Activated CD4-positive, alpha-beta T cell treated with anti-CD3 and anti-CD28 coated beads, Interleukin-2, amount 10 ng/mL, durations not matched to agents 7 days and 5 days (primary cell): ENCODE measurements at regions of chr11 and their contacts with region 1.

Region 1: DNA sequence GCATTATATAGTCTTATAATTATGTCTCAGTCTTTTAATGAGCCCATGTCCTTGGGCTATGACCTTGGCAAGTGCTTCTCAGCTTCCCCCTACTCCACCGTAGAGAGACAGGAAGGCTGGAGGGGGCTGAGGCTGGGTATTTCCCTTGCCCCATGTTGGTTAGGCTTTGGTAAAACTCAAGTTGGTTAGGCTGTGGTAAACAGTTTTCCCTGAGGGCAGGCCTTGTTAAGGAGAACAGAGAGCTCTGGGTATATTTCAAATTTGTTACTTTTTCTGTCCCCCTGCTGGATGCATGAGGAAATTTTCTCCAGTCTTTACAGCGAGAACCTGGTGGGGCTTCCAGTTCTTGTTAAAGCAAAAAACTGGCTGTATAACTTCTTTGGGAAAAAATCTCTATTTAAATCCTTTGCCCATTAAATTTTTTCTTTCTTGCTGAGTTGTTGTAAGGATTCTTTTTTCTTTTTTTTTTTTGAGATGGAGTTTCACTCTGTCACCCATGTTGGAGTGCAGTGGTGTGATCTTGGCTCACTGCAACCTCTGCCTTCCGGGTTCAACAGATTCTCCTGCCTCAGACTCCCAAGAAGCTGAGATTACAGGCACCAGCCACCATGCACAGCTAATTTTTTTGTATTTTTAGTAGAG is 12.2 kb upstream of the DCHS1 start:
- DNase-seq: peak; percentile 46
- H3K4me3 Mint-ChIP-seq: no peak overlapping the region
- H3K27ac Mint-ChIP-seq: peak overlapping the region; percentile 54
- H3K4me1 Mint-ChIP-seq: peaks cover 63% of the 10 kb centered on the region
- H3K27me3 Mint-ChIP-seq: peaks cover 3% of the 10 kb centered on the region

Region 2: GRCh38 chr11:6612213-6613041 is 55.4 kb before region 1 on chr11 and contains the start of gene TAF10:
- CTCF ChIA-PET with region 1: interaction called, 11 read pairs
- POLR2A ChIA-PET with region 1: no interaction called
- DNase-seq: peak; percentile 96
- H3K4me3 Mint-ChIP-seq: peak within 1 kb of the TSS; percentile 80
- H3K27ac Mint-ChIP-seq: peak within 1 kb of the TSS; percentile 85
- H3K4me1 Mint-ChIP-seq: peaks cover 42% of the 10 kb centered on the region
- H3K27me3 Mint-ChIP-seq: no peaks in the 10 kb centered on the region
- total RNA-seq, gene TAF10: 138 to 156 TPM

Region 3: GRCh38 chr11:6900327-6900999 is 232.6 kb after region 1 on chr11:
- CTCF ChIA-PET with region 1: no interaction called
- POLR2A ChIA-PET with region 1: no interaction called
- DNase-seq: no peak
- H3K4me3 Mint-ChIP-seq: no peak overlapping the region
- H3K27ac Mint-ChIP-seq: no peak overlapping the region
- H3K4me1 Mint-ChIP-seq: no peaks in the 10 kb centered on the region
- H3K27me3 Mint-ChIP-seq: peaks cover 9% of the 10 kb centered on the region